ENCODE measurements at regions of chr17 and their contacts with region 1.

Region 1: GRCh38 chr17:81512560-81513371 is at the start of gene ACTG1:
- DNase-seq: peak; percentile 93
- ATAC-seq: peak; percentile 49
- H3K4me3 Mint-ChIP-seq: peak within 1 kb of the TSS; percentile 93
- H3K27ac Mint-ChIP-seq: peak within 1 kb of the TSS; percentile 90
- H3K4me1 Mint-ChIP-seq: peaks cover 28% of the 10 kb centered on the region
- H3K27me3 Mint-ChIP-seq: no peaks in the 10 kb centered on the region
- total RNA-seq, gene ACTG1: 2,936 to 3,174 TPM

Region 2: DNA sequence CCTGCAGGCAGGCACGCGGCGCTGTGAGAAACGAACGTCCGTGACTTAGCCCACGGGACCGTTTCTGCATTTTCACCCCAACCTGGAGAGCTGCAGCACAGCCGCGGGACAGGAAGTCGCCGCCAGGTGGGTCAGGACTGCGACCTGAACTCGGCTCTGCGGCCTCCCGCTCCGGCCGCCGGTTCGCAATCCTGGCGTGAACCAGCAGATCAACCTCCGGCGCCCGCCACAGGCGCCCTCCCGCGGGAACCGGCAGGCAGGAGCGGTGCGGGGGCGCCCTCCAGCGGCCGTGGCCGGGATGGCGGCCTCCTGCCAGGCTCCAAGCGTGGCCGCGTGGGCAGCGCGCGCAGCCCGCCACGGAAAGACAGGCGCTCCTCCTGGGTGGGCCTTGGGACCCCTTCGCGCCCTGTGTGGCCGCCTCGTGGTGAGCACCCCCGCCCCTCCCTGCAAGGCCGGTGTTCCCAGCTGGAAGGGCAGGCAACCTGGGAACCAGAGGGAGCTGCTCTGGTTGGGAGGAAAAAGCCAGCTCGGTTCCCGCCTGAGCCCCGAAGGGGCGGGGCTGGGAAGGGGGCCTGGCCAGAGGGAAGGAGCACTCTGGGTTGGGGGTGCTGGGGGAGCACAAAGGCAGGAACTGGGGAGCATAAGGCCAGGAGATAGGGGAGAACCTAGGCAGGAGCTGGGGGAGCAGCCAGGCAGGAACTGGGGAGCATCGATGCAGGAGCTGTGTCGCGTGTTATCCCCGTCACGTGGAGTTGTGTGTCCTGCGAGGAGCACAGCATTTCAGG is 28.4 kb before region 1 on chr17:
- POLR2A ChIA-PET with region 1: interaction called, 12 read pairs
- DNase-seq: peak; percentile 97
- ATAC-seq: peak; percentile 57
- H3K4me3 Mint-ChIP-seq: peak overlapping the region; percentile 10
- H3K27ac Mint-ChIP-seq: no peak overlapping the region
- H3K4me1 Mint-ChIP-seq: peaks cover 9% of the 10 kb centered on the region
- H3K27me3 Mint-ChIP-seq: peaks cover 38% of the 10 kb centered on the region

Region 3: GRCh38 chr17:81500047-81500446 is 12.7 kb before region 1 on chr17:
- POLR2A ChIA-PET with region 1: interaction called, 11 read pairs
- DNase-seq: no peak
- ATAC-seq: no peak
- H3K4me3 Mint-ChIP-seq: no peak overlapping the region
- H3K27ac Mint-ChIP-seq: no peak overlapping the region
- H3K4me1 Mint-ChIP-seq: peaks cover 3% of the 10 kb centered on the region
- H3K27me3 Mint-ChIP-seq: peaks cover 22% of the 10 kb centered on the region

Region 4: GRCh38 chr17:81553018-81553615 is 40.4 kb after region 1 on chr17:
- POLR2A ChIA-PET with region 1: interaction called, 50 read pairs
- DNase-seq: peak; percentile 73
- ATAC-seq: peak; percentile 77
- H3K4me3 Mint-ChIP-seq: peak overlapping the region; percentile 87
- H3K27ac Mint-ChIP-seq: peak overlapping the region; percentile 88
- H3K4me1 Mint-ChIP-seq: peaks cover 19% of the 10 kb centered on the region
- H3K27me3 Mint-ChIP-seq: no peaks in the 10 kb centered on the region

Region 5: GRCh38 chr17:81566461-81567126 is 53.8 kb after region 1 on chr17:
- POLR2A ChIA-PET with region 1: no interaction called
- DNase-seq: no peak
- ATAC-seq: no peak
- H3K4me3 Mint-ChIP-seq: no peak overlapping the region
- H3K27ac Mint-ChIP-seq: no peak overlapping the region
- H3K4me1 Mint-ChIP-seq: no peaks in the 10 kb centered on the region
- H3K27me3 Mint-ChIP-seq: no peaks in the 10 kb centered on the region

Region 6: GRCh38 chr17:81794509-81794908 is 281.7 kb after region 1 on chr17:
- POLR2A ChIA-PET with region 1: no interaction called
- DNase-seq: no peak
- ATAC-seq: no peak
- H3K4me3 Mint-ChIP-seq: no peak overlapping the region
- H3K27ac Mint-ChIP-seq: no peak overlapping the region
- H3K4me1 Mint-ChIP-seq: no peaks in the 10 kb centered on the region
- H3K27me3 Mint-ChIP-seq: peaks cover 4% of the 10 kb centered on the region